Naive thymus-derived CD4-positive, alpha-beta T cell (primary cell): ENCODE measurements at regions of chrX and their contacts with region 1.

Region 1: GRCh38 chrX:48801280-48802088 is at the start of gene HDAC6:
- DNase-seq: peak; percentile 76 to 98 (median 95)
- ATAC-seq: peak; percentile 91
- H3K4me3 ChIP-seq: peak within 1 kb of the TSS; percentile 84
- H3K4me3 Mint-ChIP-seq: peak within 1 kb of the TSS; percentile 91 to 98 (median 96)
- H3K27ac ChIP-seq: peak within 1 kb of the TSS; percentile 97
- H3K27ac Mint-ChIP-seq: peak within 1 kb of the TSS; percentile 96 to 99 (median 98)
- H3K4me1 ChIP-seq: peaks cover 6 to 12% of the 10 kb centered on the region in 2 donors
- H3K4me1 Mint-ChIP-seq: peaks cover 10 to 27% (median 16%) of the 10 kb centered on the region in 7 donors
- H3K27me3 ChIP-seq: no peaks in the 10 kb centered on the region
- H3K27me3 Mint-ChIP-seq: no peaks in the 10 kb centered on the region
- total RNA-seq, gene HDAC6: 84.3 to 135 (median 96.1) TPM

Region 2: GRCh38 chrX:48521353-48522243 is 279.9 kb before region 1 on chrX and contains the start of gene EBP:
- CTCF ChIA-PET with region 1: no interaction called
- POLR2A ChIA-PET with region 1: no interaction called
- intact Hi-C with region 1: loop called in 1 of 2 experiments (anchors 5 kb)
- DNase-seq: peak; percentile 82 to 96 (median 94)
- ATAC-seq: peak; percentile 98
- H3K4me3 ChIP-seq: peak within 1 kb of the TSS; percentile 78
- H3K4me3 Mint-ChIP-seq: peak within 1 kb of the TSS; percentile 73 to 93 (median 89)
- H3K27ac ChIP-seq: peak within 1 kb of the TSS; percentile 82
- H3K27ac Mint-ChIP-seq: peak within 1 kb of the TSS; percentile 90 to 99 (median 94)
- H3K4me1 ChIP-seq: peaks cover 12 to 19% of the 10 kb centered on the region in 2 donors
- H3K4me1 Mint-ChIP-seq: peaks cover 14 to 39% (median 34%) of the 10 kb centered on the region in 7 donors
- H3K27me3 ChIP-seq: no peaks in the 10 kb centered on the region
- H3K27me3 Mint-ChIP-seq: no peaks in the 10 kb centered on the region
- total RNA-seq, gene EBP: 33.3 to 188 (median 35.3) TPM

Region 3: DNA sequence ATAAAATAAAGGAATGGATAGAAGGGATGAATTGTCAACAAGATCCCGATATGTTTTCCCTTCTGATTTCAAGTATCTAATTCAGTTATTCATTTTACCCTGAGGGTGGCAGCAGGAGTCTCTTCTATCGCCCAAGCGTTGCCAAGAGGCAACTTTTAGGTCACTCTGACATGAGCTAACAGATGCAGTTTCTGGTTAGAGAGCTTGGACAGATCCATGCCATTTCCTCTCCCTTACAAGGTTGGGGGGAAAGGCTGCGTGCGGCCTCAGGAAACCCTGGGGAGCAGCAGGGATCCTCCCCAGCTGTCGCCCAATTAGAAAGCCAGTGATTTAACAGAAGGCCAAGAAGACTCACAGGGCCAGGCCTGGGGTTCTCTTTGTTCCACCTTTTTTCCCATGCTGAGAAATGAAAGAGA is 153.1 kb before region 1 on chrX:
- CTCF ChIA-PET with region 1: no interaction called
- POLR2A ChIA-PET with region 1: interaction called, 5 read pairs
- intact Hi-C with region 1: loop called in 1 of 2 experiments (anchors 1 kb)
- DNase-seq: peak in 8 of 9 donors; percentile 17 to 54 (median 38)
- ATAC-seq: peak; percentile 70
- H3K4me3 ChIP-seq: no peak overlapping the region
- H3K4me3 Mint-ChIP-seq: no peak overlapping the region
- H3K27ac ChIP-seq: no peak overlapping the region
- H3K27ac Mint-ChIP-seq: peak overlapping the region in 3 of 9 donors; percentile 42 to 58 (median 53)
- H3K4me1 ChIP-seq: no peaks in the 10 kb centered on the region
- H3K4me1 Mint-ChIP-seq: peaks cover 0 to 18% (median 13%) of the 10 kb centered on the region in 7 donors
- H3K27me3 ChIP-seq: no peaks in the 10 kb centered on the region
- H3K27me3 Mint-ChIP-seq: no peaks in the 10 kb centered on the region

Region 4: GRCh38 chrX:48715072-48715471 is 86.4 kb before region 1 on chrX:
- CTCF ChIA-PET with region 1: no interaction called
- POLR2A ChIA-PET with region 1: interaction called, 4 read pairs
- intact Hi-C with region 1: loop called in 1 of 2 experiments (anchors 1 kb)
- DNase-seq: no peak
- ATAC-seq: no peak
- H3K4me3 ChIP-seq: no peak overlapping the region
- H3K4me3 Mint-ChIP-seq: peak overlapping the region in 8 of 10 donors; percentile 14 to 96 (median 76)
- H3K27ac ChIP-seq: peak overlapping the region; percentile 49
- H3K27ac Mint-ChIP-seq: peak overlapping the region; percentile 6 to 97 (median 90)
- H3K4me1 ChIP-seq: peaks cover 63 to 69% of the 10 kb centered on the region in 2 donors
- H3K4me1 Mint-ChIP-seq: peaks cover 65 to 84% (median 82%) of the 10 kb centered on the region in 7 donors
- H3K27me3 ChIP-seq: no peaks in the 10 kb centered on the region
- H3K27me3 Mint-ChIP-seq: peaks cover 0 to 2% (median 0%) of the 10 kb centered on the region in 5 donors

Region 5: GRCh38 chrX:48897621-48898306 is 96.3 kb after region 1 on chrX and contains the starts of genes PQBP1 and TIMM17B:
- CTCF ChIA-PET with region 1: no interaction called
- POLR2A ChIA-PET with region 1: interaction called, 9 read pairs
- intact Hi-C with region 1: loop called (anchors 1 kb)
- DNase-seq: peak; percentile 71 to 93 (median 89)
- ATAC-seq: peak; percentile 92
- H3K4me3 ChIP-seq: peak within 1 kb of the TSS; percentile 91
- H3K4me3 Mint-ChIP-seq: peak within 1 kb of the TSS; percentile 83 to 100 (median 91)
- H3K27ac ChIP-seq: peak within 1 kb of the TSS; percentile 98
- H3K27ac Mint-ChIP-seq: peak within 1 kb of the TSS; percentile 89 to 98 (median 94)
- H3K4me1 ChIP-seq: peaks cover 12 to 16% of the 10 kb centered on the region in 2 donors
- H3K4me1 Mint-ChIP-seq: peaks cover 6 to 42% (median 24%) of the 10 kb centered on the region in 7 donors
- H3K27me3 ChIP-seq: no peaks in the 10 kb centered on the region
- H3K27me3 Mint-ChIP-seq: no peaks in the 10 kb centered on the region
- total RNA-seq, gene PQBP1: 64.1 to 89.5 (median 74.6) TPM
- total RNA-seq, gene TIMM17B: 41.1 to 46.6 (median 44.2) TPM

Region 6: GRCh38 chrX:49120099-49120498 is 318.6 kb after region 1 on chrX:
- CTCF ChIA-PET with region 1: no interaction called
- POLR2A ChIA-PET with region 1: no interaction called
- intact Hi-C with region 1: loop called in 1 of 2 experiments (anchors 1 kb)
- DNase-seq: no peak
- ATAC-seq: no peak
- H3K4me3 ChIP-seq: no peak overlapping the region
- H3K4me3 Mint-ChIP-seq: peak overlapping the region in 3 of 10 donors; percentile 9 to 24 (median 12)
- H3K27ac ChIP-seq: no peak overlapping the region
- H3K27ac Mint-ChIP-seq: peak overlapping the region in 2 of 9 donors; percentile 12 to 30
- H3K4me1 ChIP-seq: peaks cover 16 to 18% of the 10 kb centered on the region in 2 donors
- H3K4me1 Mint-ChIP-seq: peaks cover 32 to 59% (median 37%) of the 10 kb centered on the region in 7 donors
- H3K27me3 ChIP-seq: no peaks in the 10 kb centered on the region
- H3K27me3 Mint-ChIP-seq: no peaks in the 10 kb centered on the region